ENCODE measurements at regions of chr15 and their contacts with region 1.

Region 1: DNA sequence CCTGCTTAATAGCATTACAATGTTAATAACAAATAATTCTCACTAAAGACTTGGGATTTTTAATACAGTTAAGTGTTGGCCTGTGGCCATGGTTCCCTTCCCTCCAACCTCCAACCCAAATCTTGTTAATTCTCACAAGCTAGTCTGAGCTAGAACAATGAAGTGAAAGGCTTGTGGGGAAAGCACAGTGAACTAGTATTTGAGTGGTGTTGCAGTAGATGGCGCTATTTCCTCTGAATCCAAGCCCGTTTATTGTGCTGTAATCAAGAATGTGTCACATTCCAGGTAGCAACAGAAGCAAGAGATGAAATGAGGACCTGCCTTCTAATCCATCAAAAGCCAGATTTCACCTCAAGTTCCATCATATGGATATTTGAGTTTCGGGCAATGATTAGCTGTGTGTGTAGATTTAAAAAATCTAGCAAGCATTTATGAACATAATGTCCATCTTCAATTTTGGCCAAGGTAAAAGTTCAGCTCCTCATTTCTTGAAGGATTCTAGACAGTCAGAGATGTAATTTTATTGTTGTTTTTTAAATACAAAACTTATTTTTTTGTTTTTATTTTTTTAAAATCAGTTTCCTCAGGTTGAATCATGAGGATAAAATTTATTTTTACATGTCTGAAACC is 160.7 kb downstream of the SQOR start:
- DNase-seq: peak; percentile 35
- H3K4me3 ChIP-seq: no peak overlapping the region; a peak in 1 of 4 replicates
- H3K27ac ChIP-seq: no peak overlapping the region
- H3K4me1 ChIP-seq: no peaks in the 10 kb centered on the region
- H3K27me3 ChIP-seq: no peaks in the 10 kb centered on the region
- CTCF ChIP-seq: peak; percentile 45
- EP300 ChIP-seq: no peak
- RAD21 ChIP-seq: peak; percentile 85

Region 2: GRCh38 chr15:45361878-45362277 is 433.7 kb before region 1 on chr15:
- CTCF ChIA-PET with region 1: no interaction called
- POLR2A ChIA-PET with region 1: no interaction called
- DNase-seq: no peak
- H3K4me3 ChIP-seq: no peak overlapping the region
- H3K27ac ChIP-seq: no peak overlapping the region
- H3K4me1 ChIP-seq: no peaks in the 10 kb centered on the region
- H3K27me3 ChIP-seq: no peaks in the 10 kb centered on the region
- CTCF ChIP-seq: no peak
- EP300 ChIP-seq: no peak
- RAD21 ChIP-seq: no peak

Region 3: GRCh38 chr15:45714590-45715488 is 80.7 kb before region 1 on chr15:
- CTCF ChIA-PET with region 1: interaction called, 170 read pairs
- POLR2A ChIA-PET with region 1: no interaction called
- DNase-seq: peak; percentile 56
- H3K4me3 ChIP-seq: no peak overlapping the region
- H3K27ac ChIP-seq: no peak overlapping the region
- H3K4me1 ChIP-seq: peaks cover 0 to 3% of the 10 kb centered on the region in 2 experiments; a peak in 2 of 4 replicates
- H3K27me3 ChIP-seq: no peaks in the 10 kb centered on the region
- CTCF ChIP-seq: peak; percentile 83
- EP300 ChIP-seq: no peak
- RAD21 ChIP-seq: peak; percentile 90

Region 4: DNA sequence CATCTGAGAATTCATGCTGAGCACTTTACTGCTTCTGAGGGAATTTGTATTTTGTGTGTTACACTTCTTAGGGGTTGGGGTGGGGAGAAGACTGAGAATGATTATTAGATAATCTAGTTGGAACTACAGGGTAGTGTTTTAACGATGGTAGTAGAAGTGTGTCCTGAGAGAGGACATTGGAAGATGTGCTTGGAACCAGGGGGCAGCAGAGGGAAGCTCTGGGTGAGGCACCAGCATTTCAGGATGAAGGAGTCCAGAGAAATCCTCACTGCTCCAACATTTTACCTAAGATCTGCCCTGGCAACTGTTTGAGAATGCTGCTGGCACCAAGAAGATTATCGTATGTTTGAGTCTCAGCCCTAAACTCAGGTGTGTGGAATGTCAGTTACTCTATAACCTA is 15.2 kb before region 1 on chr15:
- CTCF ChIA-PET with region 1: interaction called, 18 read pairs
- POLR2A ChIA-PET with region 1: no interaction called
- DNase-seq: no peak
- H3K4me3 ChIP-seq: no peak overlapping the region
- H3K27ac ChIP-seq: no peak overlapping the region
- H3K4me1 ChIP-seq: no peaks in the 10 kb centered on the region; a peak in 1 of 4 replicates
- H3K27me3 ChIP-seq: no peaks in the 10 kb centered on the region
- CTCF ChIP-seq: no peak
- EP300 ChIP-seq: no peak
- RAD21 ChIP-seq: no peak

Region 5: GRCh38 chr15:46091860-46092450 is 296.4 kb after region 1 on chr15:
- CTCF ChIA-PET with region 1: interaction called, 14 read pairs
- POLR2A ChIA-PET with region 1: no interaction called
- DNase-seq: peak; percentile 49
- H3K4me3 ChIP-seq: no peak overlapping the region; a peak in 1 of 4 replicates
- H3K27ac ChIP-seq: no peak overlapping the region
- H3K4me1 ChIP-seq: no peaks in the 10 kb centered on the region; a peak in 3 of 4 replicates
- H3K27me3 ChIP-seq: no peaks in the 10 kb centered on the region
- CTCF ChIP-seq: peak; percentile 44
- EP300 ChIP-seq: no peak
- RAD21 ChIP-seq: peak; percentile 83